MCF 10A (cell line): ENCODE measurements at regions of chr1 and their contacts with region 1.

Region 1: DNA sequence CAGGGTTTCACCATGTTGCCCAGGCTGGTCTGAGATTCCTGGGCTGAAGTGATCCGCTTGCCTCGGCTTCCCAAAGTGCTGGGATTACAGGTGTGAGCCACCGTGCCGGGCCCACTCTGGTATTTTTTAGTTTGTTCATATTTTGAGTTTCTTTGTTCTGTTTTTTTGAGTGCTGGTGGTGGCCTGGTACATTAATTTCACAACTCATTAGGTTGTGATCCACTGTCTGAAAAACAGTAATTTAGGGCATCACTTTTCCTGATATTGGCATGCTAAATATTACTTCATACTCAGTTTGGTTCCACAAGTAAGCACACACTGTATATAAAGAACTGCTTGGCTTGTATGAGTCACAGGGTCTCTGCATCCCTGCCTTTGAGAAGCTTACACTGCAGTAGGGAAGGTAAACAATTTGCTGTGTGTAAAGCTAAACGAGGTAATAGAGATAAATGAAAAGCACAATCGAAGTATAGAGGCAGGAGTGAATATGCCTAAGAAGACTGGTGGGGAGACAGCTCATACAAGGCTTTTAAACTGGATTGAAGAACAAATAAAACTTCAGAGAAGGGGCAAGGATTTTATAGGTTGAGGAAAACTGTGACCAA is 7.7 kb downstream of the SNX27 start:
- DNase-seq: peak; percentile 58
- H3K4me3 Mint-ChIP-seq: no peak overlapping the region
- H3K27ac Mint-ChIP-seq: peak overlapping the region; percentile 17
- H3K4me1 Mint-ChIP-seq: peaks cover 37% of the 10 kb centered on the region
- H3K27me3 Mint-ChIP-seq: no peaks in the 10 kb centered on the region
- CTCF ChIP-seq: no peak

Region 2: DNA sequence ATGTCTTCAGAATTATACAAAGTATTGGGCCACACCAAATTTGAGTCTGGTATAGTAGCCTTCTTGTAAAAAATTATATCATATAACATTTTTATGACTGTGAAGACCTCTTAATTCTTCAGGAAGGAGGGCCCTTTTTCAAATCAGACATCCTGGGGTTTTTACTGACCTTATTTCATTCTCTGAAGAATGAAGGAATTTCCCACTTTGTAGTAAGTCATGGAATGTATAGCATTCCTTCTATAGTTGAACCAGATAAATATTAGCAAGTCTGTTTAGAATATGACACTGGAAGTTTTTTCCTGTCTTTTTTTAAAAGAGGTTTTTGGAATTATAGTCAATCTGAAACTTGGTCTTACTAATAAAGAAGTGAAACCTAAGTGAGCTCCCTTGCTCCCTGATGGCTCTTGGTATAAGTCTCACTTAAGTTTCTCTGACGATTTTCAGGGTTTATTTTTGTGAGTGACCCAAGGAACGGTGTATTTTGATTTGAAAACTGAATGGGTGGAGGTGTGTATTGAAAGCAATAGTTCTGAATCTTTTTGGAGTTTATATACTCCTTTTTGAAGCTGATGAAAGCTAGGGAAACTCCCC is 16.0 kb after region 1 on chr1:
- CTCF ChIA-PET with region 1: interaction called, 3 read pairs
- POLR2A ChIA-PET with region 1: interaction called, 11 read pairs
- intact Hi-C with region 1: no loop called
- DNase-seq: no peak
- H3K4me3 Mint-ChIP-seq: no peak overlapping the region
- H3K27ac Mint-ChIP-seq: no peak overlapping the region
- H3K4me1 Mint-ChIP-seq: peaks cover 10% of the 10 kb centered on the region
- H3K27me3 Mint-ChIP-seq: no peaks in the 10 kb centered on the region
- CTCF ChIP-seq: no peak